Dorsolateral prefrontal cortex (tissue), 120 donors: ENCODE measurements at regions of chr5 and their contacts with region 1.

Region 1: DNA sequence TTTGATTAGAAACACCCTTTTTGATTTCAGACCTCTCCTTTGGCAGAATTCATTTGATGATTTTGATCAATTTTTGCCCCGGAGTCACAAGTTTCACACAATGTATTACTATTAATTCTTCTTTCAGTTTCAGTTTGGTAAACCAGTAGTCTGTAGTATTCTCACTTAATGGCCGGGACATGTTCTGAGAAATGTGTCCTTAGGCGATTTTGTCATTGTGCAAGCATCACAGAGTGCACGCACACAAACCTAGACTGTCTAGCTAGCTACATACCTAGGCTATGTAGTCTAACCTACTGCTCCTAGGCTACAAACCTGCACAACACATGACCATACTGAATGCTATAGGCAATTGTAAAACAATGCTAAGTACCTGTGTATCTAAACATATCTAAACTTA is 662.5 kb downstream of the IRX1 start:
- DNase-seq: no peak
- H3K4me3 ChIP-seq: no peak overlapping the region
- H3K27ac ChIP-seq: no peak overlapping the region
- H3K27me3 ChIP-seq: peaks cover 0 to 6% (median 0%) of the 10 kb centered on the region in 45 donors
- CTCF ChIP-seq: no peak

Region 2: DNA sequence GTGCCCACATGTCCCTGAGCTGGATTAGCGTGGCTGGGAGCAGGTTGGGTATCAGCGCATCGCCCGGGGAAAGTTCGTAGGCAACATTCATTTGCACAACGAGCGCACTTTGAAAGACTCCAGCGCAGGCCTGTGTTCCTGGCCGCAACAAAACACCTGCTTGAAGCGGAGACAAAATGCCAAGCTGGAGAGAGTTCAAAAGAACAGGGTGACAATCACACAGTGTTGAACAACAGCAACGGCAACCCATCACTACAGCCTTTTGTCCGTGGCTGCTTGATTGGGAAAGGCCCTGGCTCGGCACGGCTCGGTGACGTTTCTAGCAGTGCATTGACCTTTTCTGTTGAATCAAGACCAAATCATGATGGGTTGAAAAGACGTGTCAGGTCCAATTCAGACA is 326.2 kb before region 1 on chr5:
- intact Hi-C with region 1: no loop called
- DNase-seq: no peak
- H3K4me3 ChIP-seq: no peak overlapping the region
- H3K27ac ChIP-seq: no peak overlapping the region
- H3K27me3 ChIP-seq: peaks cover 0 to 34% (median 0%) of the 10 kb centered on the region in 45 donors
- CTCF ChIP-seq: no peak

Region 3: DNA sequence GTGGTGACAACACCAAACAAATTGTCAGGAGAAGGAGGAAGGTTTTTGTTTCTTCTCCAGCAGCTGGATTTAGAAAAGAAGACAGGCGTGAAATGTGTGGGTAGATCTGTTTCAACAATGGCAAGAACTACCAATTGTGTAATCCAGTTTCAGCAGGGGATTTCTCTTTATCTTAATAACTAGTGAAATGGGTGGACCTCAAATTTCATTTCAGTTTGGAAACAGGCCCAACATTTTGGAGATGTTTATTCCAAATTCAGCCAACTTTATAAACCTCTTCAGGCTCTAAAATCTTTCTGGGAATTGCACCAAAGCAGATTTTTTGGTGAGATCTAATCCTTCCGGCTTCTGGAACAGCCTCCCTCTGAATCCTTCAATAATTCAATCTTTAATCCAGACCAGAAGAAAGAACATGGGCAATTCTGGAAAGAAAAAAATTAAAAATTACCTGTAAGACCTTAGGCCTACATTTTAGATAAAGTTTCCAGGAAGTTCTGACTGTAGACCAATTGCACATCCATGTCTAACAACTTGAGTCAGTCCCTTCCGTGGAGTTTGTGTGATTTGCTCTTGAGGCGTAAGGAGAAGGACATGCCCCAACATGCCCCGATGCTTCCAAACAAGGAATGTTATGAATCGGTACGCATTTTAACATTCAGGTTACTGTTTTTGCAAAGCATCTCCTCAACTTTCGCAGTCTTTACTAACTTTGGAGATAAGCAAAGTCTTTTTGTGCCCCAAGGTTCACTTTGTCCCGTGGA is 239.0 kb before region 1 on chr5:
- intact Hi-C with region 1: no loop called
- DNase-seq: no peak
- H3K4me3 ChIP-seq: no peak overlapping the region
- H3K27ac ChIP-seq: peak overlapping the region in 1 of 59 donors; percentile 9
- H3K27me3 ChIP-seq: peaks cover 0 to 43% (median 0%) of the 10 kb centered on the region in 45 donors
- CTCF ChIP-seq: no peak

Region 4: DNA sequence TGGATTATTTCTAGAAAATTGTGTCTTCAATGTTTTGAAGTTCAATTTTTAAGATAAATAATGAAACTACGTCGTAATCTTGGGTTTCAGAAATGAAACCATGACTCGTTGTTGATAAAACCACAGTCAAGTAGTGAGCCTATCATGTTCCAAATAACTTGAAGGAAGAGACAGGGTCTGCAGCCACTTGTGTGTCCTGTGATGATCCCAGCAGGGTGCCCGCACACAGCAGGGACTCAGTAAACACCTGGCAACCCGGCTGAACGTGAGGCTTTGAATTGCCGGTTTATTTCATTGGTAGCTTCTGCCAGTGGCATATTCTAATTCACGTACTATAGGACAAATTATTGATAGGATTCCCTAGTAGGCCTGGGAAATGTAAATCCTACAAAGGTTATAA is 17.1 kb after region 1 on chr5:
- intact Hi-C with region 1: loop called in 1 of 2 experiments (anchors 1 kb)
- DNase-seq: no peak
- H3K4me3 ChIP-seq: no peak overlapping the region
- H3K27ac ChIP-seq: no peak overlapping the region
- H3K27me3 ChIP-seq: no peaks in the 10 kb centered on the region
- CTCF ChIP-seq: no peak